HEK293 (cell line): ENCODE measurements at regions of chr20 and their contacts with region 1.

Region 1: GRCh38 chr20:815914-816606 is 17.5 kb upstream of the FAM110A start:
- H3K4me3 ChIP-seq: no peak overlapping the region
- H3K27ac ChIP-seq: no peak overlapping the region
- H3K4me1 ChIP-seq: no peaks in the 10 kb centered on the region
- CTCF ChIP-seq: peak; percentile 86

Region 2: GRCh38 chr20:595330-596308 is 220.4 kb before region 1 on chr20:
- CTCF ChIA-PET with region 1: no interaction called
- POLR2A ChIA-PET with region 1: no interaction called
- H3K4me3 ChIP-seq: no peak overlapping the region
- H3K27ac ChIP-seq: no peak overlapping the region
- H3K4me1 ChIP-seq: no peaks in the 10 kb centered on the region
- CTCF ChIP-seq: no peak

Region 3: GRCh38 chr20:792248-792647 is 23.8 kb before region 1 on chr20:
- CTCF ChIA-PET with region 1: no interaction called
- POLR2A ChIA-PET with region 1: no interaction called
- H3K4me3 ChIP-seq: no peak overlapping the region
- H3K27ac ChIP-seq: no peak overlapping the region
- H3K4me1 ChIP-seq: no peaks in the 10 kb centered on the region
- CTCF ChIP-seq: no peak

Region 4: DNA sequence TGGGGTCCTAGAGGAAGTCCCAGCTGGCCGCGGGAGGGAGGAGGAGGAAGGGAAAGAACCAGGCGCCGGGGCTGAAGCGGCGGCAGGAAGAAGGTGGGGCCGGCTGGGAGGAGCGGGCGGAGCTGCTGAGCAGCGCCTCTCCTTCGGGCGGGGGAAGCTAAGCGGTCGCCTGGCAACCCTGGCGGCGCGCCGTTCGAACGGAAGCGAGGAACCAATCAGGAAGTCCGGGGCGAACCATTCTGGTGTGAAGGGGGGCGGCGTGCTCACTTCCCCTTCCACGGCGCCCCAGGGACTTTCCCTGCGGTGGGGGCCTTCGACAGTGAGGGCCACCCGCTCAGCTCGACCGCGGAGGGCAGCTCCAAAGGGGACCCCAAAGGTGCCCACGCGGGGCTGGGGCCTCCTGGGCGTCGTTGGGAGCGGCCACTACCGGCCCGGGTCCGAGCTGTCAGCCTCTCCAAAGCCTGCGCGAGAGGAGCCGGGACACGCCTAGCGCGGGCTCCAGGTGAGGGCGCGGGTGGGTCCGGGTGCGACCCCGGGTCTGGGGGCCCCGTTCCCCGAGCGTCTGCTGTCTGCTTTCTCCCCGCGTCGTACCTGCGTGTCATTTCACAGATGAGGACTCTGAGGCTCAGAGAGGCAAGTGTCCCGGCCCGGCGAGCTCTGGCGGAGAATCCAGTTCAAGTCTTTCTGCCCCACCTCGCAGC is 17.5 kb after region 1 on chr20 and contains the start of gene FAM110A:
- CTCF ChIA-PET with region 1: interaction called, 11 read pairs
- POLR2A ChIA-PET with region 1: no interaction called
- H3K4me3 ChIP-seq: peak within 1 kb of the TSS; percentile 76
- H3K27ac ChIP-seq: peak within 1 kb of the TSS; percentile 68; the same call in 1 of the 2 replicates
- H3K4me1 ChIP-seq: peaks cover 3% of the 10 kb centered on the region; the same call in 1 of the 2 replicates
- CTCF ChIP-seq: peak; percentile 68

Region 5: GRCh38 chr20:906703-907270 is 90.7 kb after region 1 on chr20:
- CTCF ChIA-PET with region 1: interaction called, 11 read pairs
- POLR2A ChIA-PET with region 1: no interaction called
- H3K4me3 ChIP-seq: no peak overlapping the region
- H3K27ac ChIP-seq: no peak overlapping the region
- H3K4me1 ChIP-seq: no peaks in the 10 kb centered on the region
- CTCF ChIP-seq: no peak

Region 6: DNA sequence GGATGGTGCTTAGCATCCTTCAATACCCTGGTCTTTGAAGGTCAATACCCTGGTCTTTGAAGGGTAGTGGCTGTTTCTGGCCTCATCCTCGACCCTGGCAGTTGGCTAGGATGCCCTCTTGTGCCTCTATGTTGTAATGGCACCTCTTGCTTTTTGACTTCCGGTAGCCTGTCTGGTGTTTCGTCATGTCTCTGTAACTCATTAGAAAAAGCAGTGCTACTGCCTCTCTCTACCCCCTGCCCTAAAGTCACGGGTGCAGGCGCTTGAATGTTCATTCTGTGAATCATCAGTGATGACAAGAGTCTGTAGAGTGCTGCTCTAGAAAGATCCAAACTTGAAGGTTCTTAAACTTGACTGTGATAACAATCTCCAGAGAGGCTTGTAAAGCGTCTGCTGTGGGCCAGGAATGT is 157.7 kb after region 1 on chr20:
- CTCF ChIA-PET with region 1: interaction called, 10 read pairs
- POLR2A ChIA-PET with region 1: no interaction called
- H3K4me3 ChIP-seq: no peak overlapping the region
- H3K27ac ChIP-seq: no peak overlapping the region
- H3K4me1 ChIP-seq: no peaks in the 10 kb centered on the region; the same call in 1 of the 2 replicates
- CTCF ChIP-seq: 0 out of 2 replicates have a peak, but pooled peaks have one; percentile 24

Region 7: GRCh38 chr20:1423625-1424106 is 607.6 kb after region 1 on chr20:
- CTCF ChIA-PET with region 1: no interaction called
- POLR2A ChIA-PET with region 1: no interaction called
- H3K4me3 ChIP-seq: no peak overlapping the region
- H3K27ac ChIP-seq: no peak overlapping the region
- H3K4me1 ChIP-seq: peaks cover 5% of the 10 kb centered on the region; the same call in 1 of the 2 replicates
- CTCF ChIP-seq: no peak